RWPE1 (cell line): ENCODE measurements at regions of chr2 and their contacts with region 1.

Region 1: GRCh38 chr2:20446917-20447436 is at the start of gene RHOB:
- DNase-seq: peak; percentile 100
- H3K27ac ChIP-seq: peak within 1 kb of the TSS; percentile 81
- CTCF ChIP-seq: no peak

Region 2: DNA sequence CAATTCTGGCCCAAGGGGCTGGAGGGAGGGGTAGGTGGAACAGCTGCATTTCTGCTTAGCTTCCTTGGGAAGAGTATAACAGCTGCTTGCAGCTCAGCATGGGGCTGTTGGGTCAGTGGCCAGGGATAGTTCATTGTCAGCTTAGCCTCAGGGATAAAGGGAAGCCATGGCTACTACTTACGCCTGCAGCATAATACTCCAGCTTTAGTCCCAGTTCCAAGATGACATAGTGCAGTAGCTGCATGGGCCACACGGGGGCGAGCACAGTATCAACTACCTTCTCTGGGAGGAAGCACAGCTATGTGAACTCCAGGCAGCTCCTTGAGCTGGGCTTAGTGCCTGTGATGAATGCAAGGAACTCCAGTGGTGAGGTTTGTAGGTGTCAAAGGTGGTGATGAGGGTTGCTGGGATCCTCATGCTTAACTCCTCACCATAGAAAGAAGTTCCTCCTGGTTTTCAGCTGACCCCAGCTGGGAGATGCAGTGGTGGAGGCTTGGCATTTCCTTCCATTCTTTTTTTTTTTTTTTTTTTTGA is 35.5 kb before region 1 on chr2:
- CTCF ChIA-PET with region 1: interaction called, 10 read pairs
- POLR2A ChIA-PET with region 1: interaction called, 3 read pairs
- DNase-seq: peak; percentile 68
- H3K27ac ChIP-seq: no peak overlapping the region
- CTCF ChIP-seq: peak; percentile 79

Region 3: GRCh38 chr2:20509766-20510495 is 63.0 kb after region 1 on chr2:
- CTCF ChIA-PET with region 1: no interaction called
- POLR2A ChIA-PET with region 1: interaction called, 14 read pairs
- DNase-seq: peak; percentile 87
- H3K27ac ChIP-seq: peak overlapping the region; percentile 92
- CTCF ChIP-seq: no peak